ENCODE measurements at regions of chr17 and their contacts with region 1.

Region 1: GRCh38 chr17:40191237-40192208 is 14.3 kb downstream of the RAPGEFL1 start:
- DNase-seq: peak; percentile 71
- ATAC-seq: peak; percentile 76
- H3K4me3 ChIP-seq: peak overlapping the region; percentile 61 to 80 (median 79)
- H3K27ac ChIP-seq: peak overlapping the region; percentile 53
- H3K4me1 ChIP-seq: peaks cover 37% of the 10 kb centered on the region
- H3K27me3 ChIP-seq: no peaks in the 10 kb centered on the region
- CTCF ChIP-seq: peak; percentile 96
- EP300 ChIP-seq: no peak
- POLR2A ChIP-seq: no peak
- RAD21 ChIP-seq: peak; percentile 50

Region 2: GRCh38 chr17:39963829-39964228 is 227.7 kb before region 1 on chr17:
- CTCF ChIA-PET with region 1: no interaction called
- POLR2A ChIA-PET with region 1: no interaction called
- in situ Hi-C with region 1: no loop called
- intact Hi-C with region 1: no loop called
- DNase-seq: no peak
- ATAC-seq: no peak
- H3K4me3 ChIP-seq: no peak overlapping the region
- H3K27ac ChIP-seq: no peak overlapping the region
- H3K4me1 ChIP-seq: peaks cover 25% of the 10 kb centered on the region
- H3K27me3 ChIP-seq: peaks cover 0 to 47% of the 10 kb centered on the region in 2 experiments; a peak in 3 of 5 replicates
- CTCF ChIP-seq: no peak
- EP300 ChIP-seq: no peak
- POLR2A ChIP-seq: no peak
- RAD21 ChIP-seq: no peak

Region 3: DNA sequence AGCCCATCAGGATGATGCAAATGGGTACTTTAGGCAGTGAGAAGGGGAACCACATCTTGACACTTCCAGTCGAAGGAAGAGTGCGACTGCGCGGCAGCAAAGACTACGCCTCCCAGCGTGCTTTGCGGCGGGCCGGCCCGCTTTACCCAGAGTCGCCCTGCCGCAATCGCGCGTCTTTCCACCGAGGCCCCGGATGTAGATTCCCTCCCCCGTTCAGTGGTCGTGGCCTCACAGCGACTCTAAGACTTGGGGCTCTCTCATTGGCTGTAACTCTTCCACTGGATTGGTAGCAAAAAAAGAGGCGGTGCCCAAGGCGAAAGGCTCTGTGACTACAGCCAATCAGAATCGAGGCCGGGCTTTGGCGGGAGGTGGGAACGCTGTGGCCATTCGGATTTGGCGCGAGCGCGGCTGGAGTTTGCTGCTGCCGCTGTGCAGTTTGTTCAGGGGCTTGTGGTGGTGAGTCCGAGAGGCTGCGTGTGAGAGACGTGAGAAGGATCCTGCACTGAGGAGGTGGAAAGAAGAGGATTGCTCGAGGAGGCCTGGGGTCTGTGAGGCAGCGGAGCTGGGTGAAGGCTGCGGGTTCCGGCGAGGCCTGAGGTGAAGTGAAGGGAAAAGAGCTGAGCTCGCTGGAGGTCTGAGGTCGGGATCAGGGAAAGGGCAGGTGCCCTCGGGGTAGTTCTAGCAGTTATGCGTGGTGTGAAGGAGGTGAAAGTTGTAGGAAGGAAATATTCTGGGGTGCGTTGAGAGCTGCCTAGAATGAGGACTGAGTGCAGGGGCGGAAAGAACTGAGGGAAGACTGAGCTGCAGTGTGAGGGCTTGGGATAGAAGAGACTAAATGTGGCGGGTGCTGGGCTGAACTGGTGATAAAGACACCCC is 96.2 kb after region 1 on chr17 and contains the start of gene CDC6:
- CTCF ChIA-PET with region 1: interaction called, 14 read pairs
- POLR2A ChIA-PET with region 1: no interaction called
- in situ Hi-C with region 1: no loop called
- intact Hi-C with region 1: no loop called
- DNase-seq: peak; percentile 100
- ATAC-seq: peak; percentile 95
- H3K4me3 ChIP-seq: peak within 1 kb of the TSS; percentile 81 to 99 (median 92)
- H3K27ac ChIP-seq: peak within 1 kb of the TSS; percentile 92
- H3K4me1 ChIP-seq: peaks cover 72% of the 10 kb centered on the region
- H3K27me3 ChIP-seq: no peaks in the 10 kb centered on the region
- CTCF ChIP-seq: peak; percentile 5; the same call in 1 of the 2 replicates
- EP300 ChIP-seq: peak; percentile 5 to 16; a peak in 1 of 4 replicates
- POLR2A ChIP-seq: peak; percentile 89 to 98
- RAD21 ChIP-seq: no peak
- total RNA-seq, gene CDC6: 114 and 154 TPM in 2 replicates

Region 4: GRCh38 chr17:40457964-40458791 is 266.7 kb after region 1 on chr17:
- CTCF ChIA-PET with region 1: no interaction called
- POLR2A ChIA-PET with region 1: no interaction called
- in situ Hi-C with region 1: no loop called
- intact Hi-C with region 1: no loop called
- DNase-seq: peak; percentile 52
- ATAC-seq: peak; percentile 17; the same call in 1 of the 3 replicates
- H3K4me3 ChIP-seq: no peak overlapping the region
- H3K27ac ChIP-seq: no peak overlapping the region
- H3K4me1 ChIP-seq: peaks cover 41% of the 10 kb centered on the region
- H3K27me3 ChIP-seq: peaks cover 0 to 2% of the 10 kb centered on the region in 2 experiments; a peak in 2 of 5 replicates
- CTCF ChIP-seq: no peak
- EP300 ChIP-seq: no peak
- POLR2A ChIP-seq: no peak
- RAD21 ChIP-seq: no peak